IMR-90 (cell line): ENCODE measurements at regions of chr2 and their contacts with region 1.

Region 1: GRCh38 chr2:219642465-219643080 is 15.1 kb downstream of the SLC4A3 start:
- DNase-seq: peak; percentile 94
- ATAC-seq: peak; percentile 97
- H3K4me3 ChIP-seq: no peak overlapping the region
- H3K27ac ChIP-seq: no peak overlapping the region
- H3K4me1 ChIP-seq: peaks cover 12% of the 10 kb centered on the region
- H3K27me3 ChIP-seq: no peaks in the 10 kb centered on the region
- CTCF ChIP-seq: peak; percentile 100; the same call in 1 of the 2 replicates
- POLR2A ChIP-seq: 0 out of 2 replicates have a peak, but pooled peaks have one; percentile 22
- RAD21 ChIP-seq: peak; percentile 96

Region 2: GRCh38 chr2:219571311-219572236 is 71.0 kb before region 1 on chr2 and contains the start of gene OBSL1:
- CTCF ChIA-PET with region 1: no interaction called
- POLR2A ChIA-PET with region 1: no interaction called
- dilution Hi-C with region 1: no loop called
- in situ Hi-C with region 1: no loop called
- intact Hi-C with region 1: loop called (anchors 1 kb)
- DNase-seq: peak; percentile 70
- ATAC-seq: peak; percentile 80
- H3K4me3 ChIP-seq: peak within 1 kb of the TSS; percentile 94
- H3K27ac ChIP-seq: peak within 1 kb of the TSS; percentile 94
- H3K4me1 ChIP-seq: peaks cover 10% of the 10 kb centered on the region
- H3K27me3 ChIP-seq: peaks cover 12% of the 10 kb centered on the region
- CTCF ChIP-seq: no peak
- POLR2A ChIP-seq: no peak
- RAD21 ChIP-seq: no peak
- total RNA-seq, gene OBSL1: 21.4 and 21.5 TPM in 2 replicates

Region 3: DNA sequence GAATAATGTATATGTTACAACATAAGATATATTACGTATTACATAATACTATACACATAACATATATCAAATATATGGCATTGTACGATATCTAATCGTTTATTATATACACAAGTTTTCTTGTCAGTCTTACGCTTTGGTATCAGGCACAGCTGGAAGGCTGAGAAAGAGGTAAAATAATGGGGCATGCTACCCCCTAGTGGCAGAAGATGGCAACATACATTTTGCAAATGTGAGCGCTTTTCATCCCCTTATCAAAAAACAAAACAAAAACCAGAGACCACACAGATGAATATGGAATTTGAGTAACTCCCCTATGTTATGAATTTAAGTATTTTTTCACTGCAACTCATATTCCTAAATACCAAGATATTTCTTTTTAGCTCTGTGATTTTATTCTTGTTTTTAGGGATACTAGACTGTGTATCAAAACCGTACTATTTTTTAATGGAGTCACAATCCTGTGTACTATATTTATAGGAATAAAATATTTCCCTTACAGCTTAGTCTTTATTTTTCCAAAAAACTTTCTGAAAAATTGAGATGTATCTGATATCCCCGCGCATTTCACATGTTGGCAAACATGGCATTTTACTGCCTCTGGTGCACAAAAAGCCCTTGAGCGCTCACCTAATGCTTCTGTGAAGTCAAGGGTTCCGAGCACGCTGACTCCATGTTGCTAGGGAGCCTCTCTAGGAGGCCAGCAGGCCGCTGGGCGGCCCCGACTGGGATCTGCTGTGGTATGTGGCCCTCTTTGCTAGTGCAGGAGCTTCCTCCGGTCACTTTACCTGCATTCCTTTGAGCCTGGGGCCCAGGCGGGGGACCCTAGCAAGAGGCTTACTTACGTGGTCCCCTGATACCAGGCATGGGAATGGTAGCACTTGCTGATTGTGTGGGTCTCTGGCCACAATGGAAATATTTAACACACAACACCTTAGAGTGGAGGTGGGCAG is 47.4 kb after region 1 on chr2:
- CTCF ChIA-PET with region 1: interaction called, 5 read pairs
- POLR2A ChIA-PET with region 1: no interaction called
- dilution Hi-C with region 1: no loop called
- in situ Hi-C with region 1: loop called (anchors 5 kb)
- intact Hi-C with region 1: loop called (anchors 1 kb)
- DNase-seq: peak; percentile 74
- ATAC-seq: peak; percentile 69
- H3K4me3 ChIP-seq: no peak overlapping the region
- H3K27ac ChIP-seq: no peak overlapping the region
- H3K4me1 ChIP-seq: peaks cover 7% of the 10 kb centered on the region
- H3K27me3 ChIP-seq: peaks cover 2% of the 10 kb centered on the region; the same call in 1 of the 2 replicates
- CTCF ChIP-seq: peak; percentile 75
- POLR2A ChIP-seq: no peak
- RAD21 ChIP-seq: peak; percentile 67